Activated T-helper 1 cell treated with anti-CD3 and anti-CD28 coated beads, Interleukin-12 subunit alpha, Interleukin-12 subunit beta, Interleukin-2, Interleukin-4 antibody, amounts not matched to agents 30 ng/mL and 10 ng/mL and 1 ng/mL, durations not matched to agents 14 hours and 24 hours and 36 hours (primary cell): ENCODE measurements at regions of chr6 and their contacts with region 1.

Region 1: DNA sequence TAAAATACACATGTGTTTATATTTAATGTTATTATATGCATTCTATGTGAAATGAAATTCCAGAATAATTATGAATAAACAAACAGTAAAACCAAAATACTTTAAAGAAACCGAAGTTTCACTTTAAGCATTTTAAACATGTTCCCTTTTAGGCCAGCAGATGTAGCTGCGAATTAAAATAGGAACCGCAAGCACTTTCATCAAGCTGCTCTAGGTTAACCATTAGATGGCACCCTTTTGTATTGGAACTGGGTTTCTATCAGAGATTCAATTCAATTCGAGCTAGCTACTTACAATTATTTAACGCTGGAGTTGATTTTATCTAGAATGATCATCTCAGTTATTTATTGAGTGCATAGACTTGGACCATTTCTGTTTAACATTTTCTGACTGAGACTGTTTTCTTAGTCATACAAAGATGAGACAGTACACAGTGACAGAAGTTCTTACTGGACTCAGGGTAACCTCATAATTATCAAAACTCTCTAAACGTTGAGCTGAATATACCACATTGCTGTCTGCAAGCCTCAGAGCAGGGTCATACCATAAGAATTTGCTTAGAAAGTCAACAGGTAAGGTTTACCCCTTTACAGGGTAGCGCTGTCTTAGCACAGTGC is 8.5 kb downstream of the TMEM242 start:
- DNase-seq: peak; percentile 32
- H3K4me3 Mint-ChIP-seq: no peak overlapping the region
- H3K27ac Mint-ChIP-seq: no peak overlapping the region
- H3K4me1 Mint-ChIP-seq: peaks cover 16% of the 10 kb centered on the region
- H3K27me3 Mint-ChIP-seq: no peaks in the 10 kb centered on the region

Region 2: GRCh38 chr6:157335829-157336228 is 21.0 kb after region 1 on chr6:
- intact Hi-C with region 1: loop called (anchors 1 kb)
- DNase-seq: no peak
- H3K4me3 Mint-ChIP-seq: no peak overlapping the region
- H3K27ac Mint-ChIP-seq: no peak overlapping the region
- H3K4me1 Mint-ChIP-seq: no peaks in the 10 kb centered on the region
- H3K27me3 Mint-ChIP-seq: peaks cover 46% of the 10 kb centered on the region

Region 3: DNA sequence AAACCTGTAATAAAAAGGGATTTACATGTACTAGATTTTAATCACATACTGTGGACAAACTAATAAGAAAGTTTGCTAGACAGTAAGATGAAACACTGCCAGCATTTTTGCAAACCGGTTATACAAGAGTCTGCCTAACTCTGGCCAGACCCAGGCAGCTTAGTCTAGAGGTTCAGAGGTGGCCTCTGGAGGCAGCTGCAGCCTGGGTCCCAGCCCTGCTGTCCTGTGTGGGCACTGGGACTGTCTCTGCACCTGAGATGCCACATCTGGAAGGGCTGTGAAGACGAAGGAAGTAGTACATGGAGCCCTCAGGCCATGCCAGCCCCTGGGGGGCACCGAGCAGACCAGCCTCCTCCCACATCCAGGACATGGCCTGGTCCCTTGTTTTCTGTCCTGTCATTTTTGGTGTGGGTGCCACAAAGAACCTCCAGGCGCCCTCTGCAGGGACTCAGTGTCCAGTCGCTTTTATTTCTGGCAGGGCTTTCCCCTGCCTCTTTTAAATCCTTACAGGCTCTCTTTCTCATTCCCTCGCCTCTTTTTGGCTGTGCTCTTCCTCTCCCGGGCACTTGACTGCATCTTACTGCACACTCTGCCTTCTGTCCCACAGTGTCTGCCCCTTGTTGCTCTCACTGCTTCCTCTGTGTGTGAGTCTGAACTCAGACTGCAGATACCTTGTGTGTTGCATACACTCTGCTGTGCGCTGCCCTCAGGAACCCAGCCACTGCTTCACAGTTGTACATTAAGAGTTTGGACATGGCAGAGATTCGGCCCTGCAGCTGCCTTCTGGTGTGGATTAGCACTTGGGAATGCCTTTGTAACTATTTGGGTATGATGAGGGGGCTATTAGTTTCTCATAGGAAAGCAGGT is 282.9 kb after region 1 on chr6:
- intact Hi-C with region 1: loop called (anchors 1 kb)
- DNase-seq: no peak
- H3K4me3 Mint-ChIP-seq: no peak overlapping the region
- H3K27ac Mint-ChIP-seq: no peak overlapping the region
- H3K4me1 Mint-ChIP-seq: peaks cover 12% of the 10 kb centered on the region
- H3K27me3 Mint-ChIP-seq: no peaks in the 10 kb centered on the region

Region 4: DNA sequence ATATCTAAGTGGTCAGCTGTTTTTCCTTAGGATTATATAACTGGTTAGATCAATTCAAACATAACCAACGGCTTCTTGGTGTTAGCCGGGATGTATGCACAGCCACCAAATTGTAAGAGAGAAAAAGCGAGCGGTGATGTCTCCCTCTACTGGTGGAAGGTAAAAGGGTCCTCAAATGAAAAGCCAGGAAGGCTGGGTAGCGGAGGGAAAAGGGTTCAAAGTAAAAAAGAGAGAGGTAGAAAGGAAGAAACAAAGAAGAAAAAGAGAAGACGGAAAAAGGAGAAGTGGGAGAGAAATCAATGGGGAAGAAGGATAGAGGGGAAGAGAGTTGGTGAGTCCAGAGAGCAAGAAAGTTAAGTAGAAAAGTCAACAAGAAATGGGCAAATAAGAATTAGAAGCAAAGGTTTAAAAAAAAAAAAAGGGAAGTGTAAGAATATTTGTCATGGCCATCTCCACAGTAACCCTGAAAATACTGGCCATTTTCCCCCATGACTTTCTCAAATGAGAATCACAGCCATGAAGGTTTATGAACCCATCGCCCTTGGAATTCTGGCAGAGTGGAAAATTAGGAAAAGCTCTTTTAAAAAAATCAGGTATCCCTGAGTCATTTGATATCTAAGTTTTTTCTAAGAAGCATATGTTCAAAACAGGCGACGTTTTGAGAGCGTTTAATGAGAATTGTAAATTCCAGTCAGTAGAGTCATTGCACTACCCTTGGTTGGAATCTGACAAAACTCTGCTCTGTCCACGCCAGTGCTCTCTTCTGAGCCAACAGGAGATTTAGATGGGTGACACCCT is 352.6 kb after region 1 on chr6:
- intact Hi-C with region 1: loop called (anchors 1 kb)
- DNase-seq: peak; percentile 30
- H3K4me3 Mint-ChIP-seq: no peak overlapping the region
- H3K27ac Mint-ChIP-seq: peak overlapping the region; percentile 41
- H3K4me1 Mint-ChIP-seq: peaks cover 12% of the 10 kb centered on the region
- H3K27me3 Mint-ChIP-seq: peaks cover 10% of the 10 kb centered on the region

Region 5: GRCh38 chr6:157946865-157947532 is 632.2 kb after region 1 on chr6:
- intact Hi-C with region 1: loop called (anchors 1 kb)
- DNase-seq: no peak
- H3K4me3 Mint-ChIP-seq: no peak overlapping the region
- H3K27ac Mint-ChIP-seq: peak overlapping the region; percentile 24
- H3K4me1 Mint-ChIP-seq: peaks cover 32% of the 10 kb centered on the region
- H3K27me3 Mint-ChIP-seq: peaks cover 9% of the 10 kb centered on the region

Region 6: DNA sequence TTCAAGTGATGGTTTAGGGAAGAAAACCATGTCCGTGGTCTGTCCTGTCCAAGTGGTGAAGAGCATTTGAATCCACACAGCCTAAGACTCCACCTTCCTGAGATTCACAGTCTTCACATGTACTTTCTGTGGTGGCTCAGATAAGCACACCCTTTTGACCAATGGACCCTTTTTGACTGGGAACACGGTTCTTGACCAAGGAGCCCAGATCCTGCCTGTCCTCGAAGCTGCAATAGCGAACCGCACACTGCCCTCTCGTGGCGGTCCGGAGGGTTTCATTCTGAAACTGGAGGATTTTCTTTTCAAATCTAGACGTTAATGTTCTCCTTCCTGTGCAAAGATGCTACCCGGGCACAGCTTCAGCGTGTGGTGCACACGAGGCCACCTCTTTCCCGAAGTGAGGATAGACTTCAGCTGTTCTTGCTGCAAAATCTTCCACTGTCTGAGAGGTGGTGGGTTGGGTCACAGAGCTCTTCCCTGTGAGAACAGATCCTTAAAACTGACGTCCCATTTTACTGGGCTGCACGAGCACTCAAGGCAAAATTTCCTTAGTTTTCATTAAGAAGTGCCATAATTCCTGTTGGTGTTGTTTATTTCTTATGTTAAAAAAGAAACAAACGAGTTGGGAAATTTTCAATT is 757.4 kb after region 1 on chr6:
- intact Hi-C with region 1: loop called (anchors 2 kb)
- DNase-seq: peak; percentile 60
- H3K4me3 Mint-ChIP-seq: no peak overlapping the region
- H3K27ac Mint-ChIP-seq: peak overlapping the region; percentile 70
- H3K4me1 Mint-ChIP-seq: peaks cover 55% of the 10 kb centered on the region
- H3K27me3 Mint-ChIP-seq: no peaks in the 10 kb centered on the region